ENCODE measurements at regions of chr1 and their contacts with region 1.

Region 1: DNA sequence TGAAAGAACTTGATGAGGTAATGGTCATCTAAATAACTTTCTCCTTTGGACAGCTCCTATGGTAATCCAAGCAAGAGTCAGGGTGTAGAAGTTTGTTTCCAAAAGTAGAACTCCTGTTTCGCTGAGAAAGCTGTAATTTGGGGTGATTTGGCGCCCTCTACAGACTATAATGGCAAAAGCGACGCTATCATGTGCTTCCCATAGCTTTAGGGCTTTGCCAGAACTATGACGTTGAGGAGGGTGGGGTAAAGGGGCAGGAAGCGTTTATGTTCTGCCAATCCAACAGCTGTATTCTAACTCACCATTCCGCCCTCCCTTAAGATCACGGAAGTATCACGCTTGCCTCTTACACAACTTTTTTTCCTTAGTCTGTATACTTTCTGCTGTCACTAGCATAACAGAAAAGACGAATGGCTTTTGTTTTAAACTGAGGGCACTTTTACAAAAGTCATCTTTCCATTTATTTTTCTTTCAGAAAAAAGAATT is at the start of gene FMO4:
- DNase-seq: peak; percentile 94
- H3K4me3 Mint-ChIP-seq: peak within 1 kb of the TSS; percentile 75
- H3K27ac Mint-ChIP-seq: peak within 1 kb of the TSS; percentile 76
- H3K4me1 Mint-ChIP-seq: peaks cover 12% of the 10 kb centered on the region
- H3K27me3 Mint-ChIP-seq: no peaks in the 10 kb centered on the region
- total RNA-seq, gene FMO4: 1.0 and 1.8 TPM in 2 replicates

Region 2: GRCh38 chr1:170531758-170532657 is 781.9 kb before region 1 on chr1 and contains the start of gene GORAB:
- intact Hi-C with region 1: loop called (anchors 10 kb)
- DNase-seq: peak; percentile 96
- H3K4me3 Mint-ChIP-seq: no peak within 1 kb of the TSS
- H3K27ac Mint-ChIP-seq: no peak within 1 kb of the TSS
- H3K4me1 Mint-ChIP-seq: peaks cover 5% of the 10 kb centered on the region
- H3K27me3 Mint-ChIP-seq: peaks cover 13% of the 10 kb centered on the region
- total RNA-seq, gene GORAB: 12.8 and 13.0 TPM in 2 replicates

Region 3: DNA sequence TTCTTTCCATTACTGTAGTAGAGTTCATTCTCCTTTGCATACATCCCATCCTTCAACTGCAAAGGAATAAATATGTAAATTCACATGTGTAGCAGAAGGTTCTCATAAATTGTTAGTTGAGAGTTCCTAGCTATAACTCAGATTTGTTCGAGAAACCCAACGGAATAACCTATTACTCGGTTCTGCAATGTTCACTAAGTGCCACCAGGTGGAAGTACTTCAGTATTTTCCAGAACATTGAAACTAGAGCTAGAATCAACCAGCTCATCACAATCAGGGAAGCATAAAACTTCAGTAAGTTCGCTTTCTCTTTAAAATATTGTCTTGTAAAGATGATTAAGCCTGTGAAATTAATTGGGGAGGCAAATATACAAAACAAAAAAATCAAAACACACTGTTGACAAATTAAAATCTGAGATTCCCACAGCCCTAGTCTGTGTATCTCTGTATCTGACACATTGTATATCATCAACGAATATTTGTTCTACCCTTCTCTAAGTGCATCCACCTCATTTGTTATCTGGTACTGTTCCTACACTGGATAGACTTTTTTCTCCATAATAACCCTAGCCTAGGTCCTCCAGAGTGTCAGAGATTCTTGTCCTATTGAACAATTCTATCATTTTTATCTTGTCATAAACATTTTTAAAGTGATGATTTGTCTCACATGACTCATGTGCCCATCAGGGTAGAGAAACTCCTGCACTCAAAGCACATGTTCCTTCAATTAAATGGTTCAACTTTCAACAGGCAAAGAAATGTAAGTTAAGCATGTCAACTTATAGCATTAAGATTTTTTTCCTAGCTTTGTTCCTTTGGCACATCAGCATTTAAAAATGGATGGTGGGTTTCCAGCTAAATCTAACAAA is 346.6 kb before region 1 on chr1:
- intact Hi-C with region 1: loop called (anchors 2 kb)
- DNase-seq: no peak
- H3K4me3 Mint-ChIP-seq: no peak overlapping the region
- H3K27ac Mint-ChIP-seq: no peak overlapping the region
- H3K4me1 Mint-ChIP-seq: no peaks in the 10 kb centered on the region
- H3K27me3 Mint-ChIP-seq: peaks cover 8% of the 10 kb centered on the region

Region 4: DNA sequence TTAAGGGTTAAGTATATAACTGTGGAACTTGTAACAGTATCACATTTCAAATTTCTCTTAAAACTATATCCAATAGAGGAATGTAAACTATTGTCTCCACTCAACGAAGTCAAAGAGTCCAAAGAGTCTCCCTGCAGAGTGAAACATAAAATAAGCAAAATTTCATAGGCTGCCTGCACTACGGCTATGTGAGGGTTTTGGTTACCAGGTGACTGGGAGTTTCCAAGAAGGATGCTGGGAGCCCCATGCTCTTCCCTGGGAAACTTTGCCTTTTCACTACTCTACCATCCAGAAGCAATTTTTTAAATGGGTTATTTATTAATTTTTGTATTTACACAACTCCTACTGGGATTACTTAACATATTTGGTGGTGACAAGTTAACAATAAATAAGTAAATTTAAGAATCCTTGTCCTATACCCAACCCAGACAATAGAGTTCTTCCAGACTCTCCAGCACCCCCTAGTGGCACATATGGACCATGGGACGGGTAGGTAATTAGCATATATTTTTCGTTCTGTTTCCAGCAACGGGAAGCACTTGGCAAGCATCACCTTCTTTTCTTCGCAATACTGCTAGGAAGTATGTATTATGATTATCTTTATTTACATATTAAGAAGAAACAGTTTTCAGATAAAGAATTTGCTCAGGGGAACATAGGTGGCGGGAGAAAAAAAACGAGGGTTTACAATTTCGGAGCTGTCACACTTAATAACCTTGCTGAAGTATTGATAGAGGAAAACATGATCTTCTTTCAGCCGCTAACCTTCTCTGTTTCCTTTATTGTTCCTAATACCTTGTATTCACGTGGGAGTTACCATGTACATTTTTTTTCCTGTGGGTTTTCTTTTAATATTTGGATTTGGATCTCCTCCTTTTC is 125.3 kb before region 1 on chr1:
- intact Hi-C with region 1: loop called (anchors 2 kb)
- DNase-seq: peak; percentile 79
- H3K4me3 Mint-ChIP-seq: no peak overlapping the region
- H3K27ac Mint-ChIP-seq: no peak overlapping the region
- H3K4me1 Mint-ChIP-seq: no peaks in the 10 kb centered on the region
- H3K27me3 Mint-ChIP-seq: peaks cover 11% of the 10 kb centered on the region

Region 5: GRCh38 chr1:171245458-171246064 is 68.3 kb before region 1 on chr1:
- intact Hi-C with region 1: loop called (anchors 1 kb)
- DNase-seq: peak; percentile 67
- H3K4me3 Mint-ChIP-seq: no peak overlapping the region
- H3K27ac Mint-ChIP-seq: no peak overlapping the region
- H3K4me1 Mint-ChIP-seq: no peaks in the 10 kb centered on the region
- H3K27me3 Mint-ChIP-seq: peaks cover 39% of the 10 kb centered on the region

Region 6: DNA sequence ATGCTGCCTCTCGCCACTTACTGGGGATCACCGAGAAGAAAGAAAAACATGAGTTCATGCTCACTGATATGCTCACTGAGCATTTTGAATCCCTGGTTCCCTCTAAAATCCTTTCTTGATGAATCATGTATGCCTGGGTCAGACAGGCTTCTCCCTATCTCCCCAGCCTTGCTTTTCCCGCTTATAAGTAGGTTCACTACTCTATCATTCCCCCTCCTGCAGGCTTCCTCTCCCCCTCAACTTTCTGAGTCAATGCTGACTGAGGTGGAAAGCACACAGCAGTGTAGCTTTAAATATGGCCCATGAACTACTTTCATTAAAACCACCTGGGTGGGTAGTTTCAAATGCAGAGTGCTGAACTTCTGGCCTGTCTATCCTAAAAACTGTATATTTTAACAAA is 41.8 kb after region 1 on chr1:
- intact Hi-C with region 1: no loop called
- DNase-seq: no peak
- H3K4me3 Mint-ChIP-seq: no peak overlapping the region
- H3K27ac Mint-ChIP-seq: no peak overlapping the region
- H3K4me1 Mint-ChIP-seq: no peaks in the 10 kb centered on the region
- H3K27me3 Mint-ChIP-seq: peaks cover 4% of the 10 kb centered on the region

Region 7: GRCh38 chr1:171781176-171781875 is 467.4 kb after region 1 on chr1 and contains the start of gene METTL13:
- intact Hi-C with region 1: loop called (anchors 5 kb)
- DNase-seq: peak; percentile 100
- H3K4me3 Mint-ChIP-seq: peak within 1 kb of the TSS; percentile 98
- H3K27ac Mint-ChIP-seq: peak within 1 kb of the TSS; percentile 94
- H3K4me1 Mint-ChIP-seq: peaks cover 45% of the 10 kb centered on the region
- H3K27me3 Mint-ChIP-seq: no peaks in the 10 kb centered on the region
- total RNA-seq, gene METTL13: 56.1 and 57.8 TPM in 2 replicates